Posterior cingulate gyrus (tissue), 11 donors: ENCODE measurements at regions of chr20 and their contacts with region 1.

Region 1: GRCh38 chr20:38926142-38926933 is at the start of gene FAM83D:
- DNase-seq: peak; percentile 90 to 99 (median 95)

Region 2: DNA sequence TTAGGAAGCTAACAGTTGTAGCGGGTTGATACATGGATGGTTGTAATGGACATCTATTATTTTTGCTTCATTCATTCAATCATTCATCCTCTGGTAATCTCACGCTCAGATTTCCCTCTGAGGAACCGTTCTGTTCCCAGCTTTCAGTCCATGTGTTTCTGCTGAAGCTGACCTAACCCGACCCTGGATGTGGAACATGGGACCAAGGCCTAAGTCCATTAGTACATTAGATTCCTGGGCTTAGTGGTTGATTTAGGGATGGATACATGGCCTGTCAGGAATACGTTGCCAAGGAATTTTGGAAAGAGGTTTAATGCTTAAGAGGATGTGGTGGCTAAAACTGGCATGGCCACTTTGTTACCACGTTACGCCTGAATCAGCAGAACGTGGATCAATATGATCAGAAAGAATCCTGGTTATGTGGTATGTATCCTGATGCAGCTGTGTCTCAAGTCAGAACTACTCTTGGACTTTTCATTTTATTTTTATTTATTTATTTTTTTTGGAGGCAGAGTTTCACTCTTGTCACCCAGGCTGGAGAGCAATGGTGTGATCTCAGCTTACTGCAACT is 31.7 kb after region 1 on chr20:
- intact Hi-C with region 1: loop called (anchors 2 kb)
- DNase-seq: no peak

Region 3: DNA sequence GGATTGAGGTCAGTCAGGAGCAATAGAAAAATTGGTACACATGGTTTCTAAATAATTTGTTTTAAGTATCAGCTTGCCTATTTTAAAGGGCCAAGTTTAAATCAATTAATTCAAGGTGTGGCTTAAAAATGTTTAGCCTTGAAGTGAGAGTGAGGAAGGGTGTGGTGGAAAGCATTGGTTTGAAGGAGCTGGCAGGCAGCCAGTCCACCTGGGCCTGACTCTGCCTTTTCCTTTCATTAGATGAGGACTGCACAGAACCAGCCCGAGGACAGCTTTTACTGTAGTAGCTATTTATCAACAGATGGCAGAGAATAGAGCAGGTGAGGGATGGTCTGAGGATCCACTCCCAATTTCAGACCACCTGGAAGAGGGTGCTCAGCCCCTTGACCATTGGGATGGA is 78.2 kb after region 1 on chr20:
- intact Hi-C with region 1: no loop called
- DNase-seq: no peak

Region 4: DNA sequence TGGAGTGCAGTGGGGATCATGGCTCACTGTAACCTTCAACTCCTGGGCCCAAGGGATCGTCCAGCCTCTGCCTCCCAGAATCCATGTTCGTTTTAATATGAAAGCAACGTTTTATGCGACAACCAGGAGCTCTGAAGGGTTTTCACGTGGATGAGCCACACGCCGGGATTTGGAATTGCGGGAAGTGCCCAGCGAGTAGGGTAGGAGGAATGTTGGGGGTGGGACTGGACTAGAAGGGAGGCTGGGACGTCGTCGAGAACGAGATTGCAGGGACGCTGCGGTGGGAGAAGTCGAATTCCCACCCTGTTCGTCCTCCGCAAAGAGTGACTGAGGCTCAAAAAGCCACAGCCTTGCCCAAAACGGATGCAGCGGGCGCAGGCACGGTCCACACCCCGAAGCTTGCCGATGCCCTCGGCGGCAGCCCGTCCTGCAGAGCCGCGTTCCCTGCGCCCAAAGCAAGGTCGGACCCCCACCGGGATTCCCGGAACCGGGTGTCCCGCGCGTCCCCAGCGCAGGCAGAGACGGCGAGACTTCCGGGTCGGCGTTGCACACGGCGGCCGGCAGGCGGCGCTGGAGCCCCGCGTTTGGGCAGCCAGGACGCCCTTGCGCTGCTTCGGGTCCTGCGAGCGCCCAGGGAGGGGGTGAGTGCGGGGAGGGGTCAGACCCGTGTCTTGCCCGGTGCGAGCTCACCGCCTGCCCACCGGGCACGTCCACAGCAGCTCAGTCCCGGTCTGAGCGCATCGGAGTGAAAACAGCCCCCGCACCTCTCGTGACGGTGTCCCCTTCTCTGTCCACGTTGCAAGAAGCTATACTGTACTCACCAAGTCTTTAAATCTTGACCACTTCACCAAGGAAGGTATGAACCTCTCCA is 123.6 kb after region 1 on chr20:
- intact Hi-C with region 1: loop called (anchors 1 kb)
- DNase-seq: peak; percentile 63 to 97 (median 80)